CD8-positive, alpha-beta T cell (primary cell): ENCODE measurements at regions of chr7 and their contacts with region 1.

Region 1: DNA sequence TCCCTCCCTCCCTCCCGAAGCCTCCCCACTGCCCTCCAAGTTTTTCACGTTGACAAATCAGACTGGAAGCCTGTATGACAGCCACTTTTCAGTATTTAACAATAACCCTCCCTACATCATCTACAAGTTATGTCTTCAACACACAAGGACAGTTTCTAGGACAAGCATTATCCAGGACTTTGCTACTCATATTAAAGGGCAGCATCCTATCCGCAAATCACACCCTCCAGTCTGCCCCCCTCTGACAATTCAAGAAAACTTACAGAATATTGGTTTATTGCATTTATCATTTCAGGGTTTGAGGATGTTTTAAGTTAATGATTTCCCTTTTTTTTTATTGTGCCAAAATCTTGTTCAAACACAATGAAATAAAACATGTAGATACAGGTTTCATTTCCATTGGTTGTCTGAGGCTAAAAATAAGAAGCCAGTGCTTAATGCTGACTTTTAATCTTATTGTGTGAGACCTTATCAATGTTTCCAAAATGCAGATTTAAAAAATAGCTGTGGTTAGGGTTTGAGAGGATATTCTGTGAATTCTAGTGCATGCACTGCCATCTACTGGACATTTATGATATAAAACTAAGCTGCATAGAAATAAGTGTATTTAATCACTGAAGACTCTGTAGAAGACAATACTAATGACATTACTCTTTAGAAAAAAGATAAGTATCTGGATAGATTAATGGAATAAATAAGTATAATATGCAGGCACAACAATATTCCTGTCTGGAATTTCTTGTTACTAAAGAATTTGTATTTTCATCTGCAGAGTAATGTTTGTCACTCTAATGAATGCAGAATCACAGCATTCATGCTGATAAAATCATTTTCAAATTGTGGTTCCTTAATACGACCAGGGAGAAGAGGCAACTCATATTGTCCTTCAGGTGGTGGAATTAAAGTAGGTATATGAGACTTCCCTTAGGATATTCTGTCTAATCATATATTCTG is 64.1 kb downstream of the CAV1 start:
- DNase-seq: peak in 2 of 9 experiments; percentile 54 to 63
- ATAC-seq: no peak
- H3K4me3 ChIP-seq: no peak overlapping the region
- H3K4me3 Mint-ChIP-seq: no peak overlapping the region
- H3K27ac ChIP-seq: no peak overlapping the region
- H3K27ac Mint-ChIP-seq: no peak overlapping the region
- H3K4me1 ChIP-seq: peaks cover 4% of the 10 kb centered on the region
- H3K4me1 Mint-ChIP-seq: peaks cover 16% of the 10 kb centered on the region
- H3K27me3 ChIP-seq: peaks cover 0 to 2% of the 10 kb centered on the region in 2 experiments
- H3K27me3 Mint-ChIP-seq: peaks cover 15% of the 10 kb centered on the region
- CTCF ChIP-seq: peak; percentile 95

Region 2: GRCh38 chr7:116138202-116138801 is 450.6 kb before region 1 on chr7:
- CTCF ChIA-PET with region 1: interaction called, 4 read pairs
- POLR2A ChIA-PET with region 1: no interaction called
- intact Hi-C with region 1: loop called in 1 of 2 experiments (anchors 1 kb)
- DNase-seq: peak in 3 of 9 experiments; percentile 16 to 70 (median 60)
- ATAC-seq: peak; percentile 82
- H3K4me3 ChIP-seq: no peak overlapping the region
- H3K4me3 Mint-ChIP-seq: no peak overlapping the region
- H3K27ac ChIP-seq: no peak overlapping the region
- H3K27ac Mint-ChIP-seq: no peak overlapping the region
- H3K4me1 ChIP-seq: peaks cover 4% of the 10 kb centered on the region
- H3K4me1 Mint-ChIP-seq: peaks cover 6% of the 10 kb centered on the region
- H3K27me3 ChIP-seq: no peaks in the 10 kb centered on the region
- H3K27me3 Mint-ChIP-seq: peaks cover 2% of the 10 kb centered on the region
- CTCF ChIP-seq: peak; percentile 84

Region 3: GRCh38 chr7:116180302-116180701 is 408.6 kb before region 1 on chr7:
- CTCF ChIA-PET with region 1: interaction called, 10 read pairs
- POLR2A ChIA-PET with region 1: no interaction called
- intact Hi-C with region 1: no loop called
- DNase-seq: peak in 5 of 9 experiments; percentile 16 to 76 (median 51)
- ATAC-seq: peak; percentile 80
- H3K4me3 ChIP-seq: no peak overlapping the region
- H3K4me3 Mint-ChIP-seq: no peak overlapping the region
- H3K27ac ChIP-seq: no peak overlapping the region
- H3K27ac Mint-ChIP-seq: no peak overlapping the region
- H3K4me1 ChIP-seq: no peaks in the 10 kb centered on the region
- H3K4me1 Mint-ChIP-seq: peaks cover 3% of the 10 kb centered on the region
- H3K27me3 ChIP-seq: no peaks in the 10 kb centered on the region
- H3K27me3 Mint-ChIP-seq: peaks cover 3% of the 10 kb centered on the region
- CTCF ChIP-seq: peak; percentile 77

Region 4: GRCh38 chr7:116316833-116317612 is 271.9 kb before region 1 on chr7:
- CTCF ChIA-PET with region 1: no interaction called
- POLR2A ChIA-PET with region 1: no interaction called
- intact Hi-C with region 1: no loop called
- DNase-seq: no peak
- ATAC-seq: no peak
- H3K4me3 ChIP-seq: no peak overlapping the region
- H3K4me3 Mint-ChIP-seq: no peak overlapping the region
- H3K27ac ChIP-seq: no peak overlapping the region
- H3K27ac Mint-ChIP-seq: no peak overlapping the region
- H3K4me1 ChIP-seq: no peaks in the 10 kb centered on the region
- H3K4me1 Mint-ChIP-seq: no peaks in the 10 kb centered on the region
- H3K27me3 ChIP-seq: no peaks in the 10 kb centered on the region
- H3K27me3 Mint-ChIP-seq: peaks cover 10% of the 10 kb centered on the region
- CTCF ChIP-seq: no peak

Region 5: GRCh38 chr7:116525913-116526861 is 62.7 kb before region 1 on chr7:
- CTCF ChIA-PET with region 1: interaction called, 11 read pairs
- POLR2A ChIA-PET with region 1: no interaction called
- intact Hi-C with region 1: no loop called
- DNase-seq: peak; percentile 19 to 80 (median 59)
- ATAC-seq: peak; percentile 92
- H3K4me3 ChIP-seq: peak overlapping the region; percentile 59 to 67
- H3K4me3 Mint-ChIP-seq: peak overlapping the region; percentile 83
- H3K27ac ChIP-seq: no peak overlapping the region
- H3K27ac Mint-ChIP-seq: no peak overlapping the region
- H3K4me1 ChIP-seq: peaks cover 21% of the 10 kb centered on the region
- H3K4me1 Mint-ChIP-seq: peaks cover 25% of the 10 kb centered on the region
- H3K27me3 ChIP-seq: peaks cover 15 to 31% of the 10 kb centered on the region in 2 experiments
- H3K27me3 Mint-ChIP-seq: peaks cover 60% of the 10 kb centered on the region
- CTCF ChIP-seq: peak; percentile 59

Region 6: DNA sequence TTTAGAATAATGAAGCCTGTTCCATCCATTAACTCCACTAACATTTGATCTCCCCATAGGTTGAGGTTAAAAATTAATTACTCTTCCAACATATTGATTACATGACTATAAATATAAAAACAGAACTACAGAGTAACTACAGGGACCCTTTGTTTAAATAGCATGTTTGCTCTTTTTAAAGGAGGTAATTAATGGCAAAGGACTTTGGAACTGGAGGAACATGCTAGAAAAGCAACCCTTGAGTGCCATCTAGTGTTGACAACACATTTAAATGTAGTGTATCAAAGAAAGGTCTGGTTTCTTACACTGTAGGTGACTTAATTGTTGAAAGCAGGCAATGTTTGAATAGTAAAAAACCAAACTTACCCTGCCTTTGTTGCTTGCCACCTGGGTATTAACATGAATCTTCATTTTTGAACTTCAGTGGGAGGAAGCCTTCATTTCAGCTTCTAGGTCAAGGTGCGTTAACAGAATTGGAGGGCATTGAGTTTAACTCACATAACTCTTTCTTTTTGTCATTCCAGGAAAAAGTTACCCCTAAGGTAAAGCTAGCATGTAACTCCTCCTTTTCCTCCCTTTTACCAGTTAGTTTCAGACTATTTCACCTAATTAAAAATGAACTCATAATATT is 220.8 kb after region 1 on chr7:
- CTCF ChIA-PET with region 1: no interaction called
- POLR2A ChIA-PET with region 1: no interaction called
- intact Hi-C with region 1: loop called (anchors 5 kb)
- DNase-seq: peak in 2 of 9 experiments; percentile 52 to 60
- ATAC-seq: no peak
- H3K4me3 ChIP-seq: no peak overlapping the region
- H3K4me3 Mint-ChIP-seq: no peak overlapping the region
- H3K27ac ChIP-seq: no peak overlapping the region
- H3K27ac Mint-ChIP-seq: no peak overlapping the region
- H3K4me1 ChIP-seq: no peaks in the 10 kb centered on the region
- H3K4me1 Mint-ChIP-seq: no peaks in the 10 kb centered on the region
- H3K27me3 ChIP-seq: no peaks in the 10 kb centered on the region
- H3K27me3 Mint-ChIP-seq: peaks cover 6% of the 10 kb centered on the region
- CTCF ChIP-seq: peak; percentile 58